ENCODE measurements at regions of chr12 and their contacts with region 1.

Region 1: GRCh38 chr12:14111230-14111865 is 129.9 kb upstream of the GRIN2B start:
- DNase-seq: no peak
- H3K4me3 ChIP-seq: no peak overlapping the region
- H3K27ac ChIP-seq: no peak overlapping the region
- H3K4me1 ChIP-seq: no peaks in the 10 kb centered on the region
- H3K27me3 ChIP-seq: no peaks in the 10 kb centered on the region
- CTCF ChIP-seq: no peak

Region 2: DNA sequence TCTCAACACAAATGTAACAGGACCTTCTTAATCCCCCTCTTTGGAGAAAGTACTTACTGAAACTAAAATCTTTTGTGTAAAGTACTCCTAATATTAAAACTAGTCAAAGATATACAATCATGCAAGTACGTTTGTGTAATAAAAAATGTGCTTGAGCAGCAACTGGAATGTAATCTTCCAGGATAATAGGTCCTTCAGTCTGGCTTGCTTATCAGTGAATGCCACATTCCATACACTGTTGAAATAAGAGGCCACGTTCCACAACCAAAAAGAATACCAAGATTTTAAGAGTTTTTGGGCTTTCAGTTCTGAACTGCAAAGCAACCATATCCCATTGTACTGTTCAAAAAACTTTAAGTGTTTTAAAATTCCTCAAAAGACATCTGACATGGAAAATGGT is 103.7 kb before region 1 on chr12:
- CTCF ChIA-PET with region 1: no interaction called
- dilution Hi-C with region 1: loop called (anchors 5 kb)
- in situ Hi-C with region 1: no loop called
- intact Hi-C with region 1: no loop called
- DNase-seq: no peak
- H3K4me3 ChIP-seq: no peak overlapping the region
- H3K27ac ChIP-seq: no peak overlapping the region
- H3K4me1 ChIP-seq: no peaks in the 10 kb centered on the region
- H3K27me3 ChIP-seq: no peaks in the 10 kb centered on the region
- CTCF ChIP-seq: no peak

Measured in mammary epithelial cell (primary cell).